ENCODE measurements at regions of chr11 and their contacts with region 1.

Region 1: DNA sequence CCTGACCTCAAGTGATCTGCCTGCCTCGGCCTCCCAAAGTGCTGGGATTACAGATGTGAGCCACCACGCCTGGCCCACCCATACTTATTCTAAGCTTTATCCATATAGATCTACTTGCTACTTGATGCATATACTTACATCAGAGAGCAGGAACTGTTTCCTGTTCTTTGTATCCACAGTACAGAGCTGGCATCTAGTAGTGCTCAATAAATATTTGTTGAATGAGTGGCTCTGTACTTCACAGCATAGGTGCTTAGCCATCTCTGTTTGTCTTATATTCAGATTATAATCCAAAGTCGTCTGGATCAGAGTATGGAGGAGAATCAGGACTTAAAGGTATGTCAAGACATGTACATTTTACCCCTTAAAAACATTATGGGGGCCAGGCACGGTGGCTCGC is 38.6 kb upstream of the DLAT start:
- DNase-seq: no peak
- H3K4me3 ChIP-seq: no peak overlapping the region
- H3K27ac ChIP-seq: peak overlapping the region in 1 of 2 donors; percentile 23
- H3K4me1 ChIP-seq: peaks cover 0 to 4% of the 10 kb centered on the region in 2 donors
- H3K27me3 ChIP-seq: no peaks in the 10 kb centered on the region
- CTCF ChIP-seq: no peak
- POLR2A ChIP-seq: no peak

Region 2: GRCh38 chr11:111922803-111923202 is 63.8 kb before region 1 on chr11:
- intact Hi-C with region 1: loop called (anchors 5 kb)
- DNase-seq: no peak
- H3K4me3 ChIP-seq: peak overlapping the region; percentile 6 to 21 (median 6)
- H3K27ac ChIP-seq: peak overlapping the region; percentile 88 to 89
- H3K4me1 ChIP-seq: peaks cover 0 to 14% of the 10 kb centered on the region in 2 donors
- H3K27me3 ChIP-seq: no peaks in the 10 kb centered on the region
- CTCF ChIP-seq: no peak
- POLR2A ChIP-seq: no peak

Region 3: GRCh38 chr11:112143597-112143996 is 157.0 kb after region 1 on chr11:
- intact Hi-C with region 1: no loop called
- DNase-seq: no peak
- H3K4me3 ChIP-seq: no peak overlapping the region
- H3K27ac ChIP-seq: no peak overlapping the region
- H3K4me1 ChIP-seq: no peaks in the 10 kb centered on the region
- H3K27me3 ChIP-seq: no peaks in the 10 kb centered on the region
- CTCF ChIP-seq: no peak
- POLR2A ChIP-seq: no peak

Measured in breast epithelium (tissue), 4 donors.